ENCODE measurements at regions of chr1 and their contacts with region 1.

Region 1: DNA sequence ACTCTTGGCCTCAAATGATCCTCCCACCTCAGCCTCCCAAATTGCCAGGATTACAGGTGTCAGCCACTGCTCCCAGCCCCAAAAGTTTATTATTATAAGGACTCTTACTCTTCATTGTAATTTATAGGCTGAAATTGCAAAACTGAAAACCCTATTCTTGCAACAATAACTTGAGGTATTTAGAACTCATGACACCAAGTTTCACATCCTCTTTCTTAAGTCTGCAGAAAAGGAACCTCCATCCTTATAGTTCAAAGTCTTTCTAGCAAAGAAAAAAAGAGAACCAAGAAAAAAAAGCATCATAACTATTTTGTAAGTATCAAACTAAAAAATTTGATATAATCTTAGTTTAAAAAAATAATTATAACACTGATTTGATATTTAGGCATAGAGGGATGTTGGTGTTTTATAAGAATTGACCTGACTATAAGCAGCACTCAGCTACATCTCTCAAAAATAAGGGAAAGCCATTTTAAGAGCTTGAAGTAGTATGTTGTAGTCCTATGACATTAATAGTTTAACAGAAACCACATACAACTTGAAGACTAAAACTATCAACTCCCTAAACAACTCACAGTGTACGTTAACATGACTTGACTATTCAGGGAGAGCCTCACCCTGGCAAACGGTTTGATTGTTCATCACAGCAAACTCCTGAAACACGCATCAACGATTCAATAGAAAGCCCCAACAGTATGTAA is 122.4 kb downstream of the AKT3 start:
- DNase-seq: no peak
- H3K4me3 Mint-ChIP-seq: no peak overlapping the region
- H3K27ac Mint-ChIP-seq: no peak overlapping the region
- H3K4me1 Mint-ChIP-seq: no peaks in the 10 kb centered on the region
- H3K27me3 Mint-ChIP-seq: no peaks in the 10 kb centered on the region
- CTCF ChIP-seq: no peak

Region 2: DNA sequence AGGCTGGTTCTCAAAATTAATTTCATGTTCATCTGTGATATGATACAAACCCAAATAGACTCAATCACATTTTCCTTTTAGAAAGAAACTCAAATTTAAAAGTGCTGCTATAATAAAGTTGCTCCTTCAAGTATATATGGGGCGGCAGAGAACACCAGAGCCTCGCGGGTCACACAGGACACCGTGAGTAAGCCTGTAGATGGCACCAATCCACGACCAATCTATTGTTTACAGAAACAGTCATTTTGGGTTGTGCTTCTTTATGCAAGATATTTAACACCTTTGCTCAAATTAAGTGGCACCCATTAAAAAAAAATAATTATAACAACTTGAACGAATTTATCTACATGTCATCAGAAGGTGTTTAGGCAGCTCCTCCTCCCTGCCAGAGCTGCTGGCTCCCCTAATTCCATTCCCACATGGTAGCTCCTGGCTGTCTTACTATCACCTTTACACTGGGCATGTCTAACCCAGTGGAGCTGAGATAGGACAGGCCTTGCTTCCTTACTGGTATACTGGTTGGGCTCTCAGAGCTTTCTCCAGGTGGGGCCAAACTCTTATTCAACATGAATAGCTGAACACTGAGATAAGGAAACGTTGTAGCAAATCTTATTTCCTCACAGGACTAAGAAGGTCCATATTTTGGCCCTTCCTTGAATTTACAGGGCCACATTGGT is 184.8 kb before region 1 on chr1:
- CTCF ChIA-PET with region 1: no interaction called
- POLR2A ChIA-PET with region 1: no interaction called
- intact Hi-C with region 1: no loop called
- DNase-seq: peak; percentile 57
- H3K4me3 Mint-ChIP-seq: no peak overlapping the region
- H3K27ac Mint-ChIP-seq: no peak overlapping the region
- H3K4me1 Mint-ChIP-seq: no peaks in the 10 kb centered on the region
- H3K27me3 Mint-ChIP-seq: no peaks in the 10 kb centered on the region
- CTCF ChIP-seq: no peak

Region 3: DNA sequence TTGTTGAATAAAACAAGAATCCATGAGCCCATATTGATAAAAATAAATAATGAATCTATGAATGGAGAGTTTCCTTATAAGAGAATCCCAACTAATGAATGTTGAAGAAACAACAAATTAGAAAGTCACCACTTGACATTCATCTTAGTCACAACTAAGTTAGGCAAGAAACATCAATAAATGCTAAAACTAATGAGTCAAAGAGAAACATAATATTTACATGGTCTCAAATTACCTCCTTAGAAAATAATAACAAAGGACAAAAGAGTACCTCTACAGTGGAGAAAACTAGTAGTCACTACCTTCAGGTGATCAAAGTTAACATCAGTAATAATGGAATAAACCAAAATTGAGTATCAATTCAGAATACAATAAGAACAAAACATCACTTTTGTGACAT is 28.9 kb after region 1 on chr1:
- CTCF ChIA-PET with region 1: interaction called, 3 read pairs
- POLR2A ChIA-PET with region 1: interaction called, 3 read pairs
- intact Hi-C with region 1: loop called (anchors 2 kb)
- DNase-seq: no peak
- H3K4me3 Mint-ChIP-seq: no peak overlapping the region
- H3K27ac Mint-ChIP-seq: no peak overlapping the region
- H3K4me1 Mint-ChIP-seq: no peaks in the 10 kb centered on the region
- H3K27me3 Mint-ChIP-seq: no peaks in the 10 kb centered on the region
- CTCF ChIP-seq: no peak

Region 4: GRCh38 chr1:243806310-243806709 is 78.7 kb after region 1 on chr1:
- CTCF ChIA-PET with region 1: no interaction called
- POLR2A ChIA-PET with region 1: no interaction called
- intact Hi-C with region 1: no loop called
- DNase-seq: no peak
- H3K4me3 Mint-ChIP-seq: no peak overlapping the region
- H3K27ac Mint-ChIP-seq: no peak overlapping the region
- H3K4me1 Mint-ChIP-seq: peaks cover 8% of the 10 kb centered on the region
- H3K27me3 Mint-ChIP-seq: no peaks in the 10 kb centered on the region
- CTCF ChIP-seq: no peak

Region 5: GRCh38 chr1:243974451-243975292 is 247.0 kb after region 1 on chr1:
- CTCF ChIA-PET with region 1: no interaction called
- POLR2A ChIA-PET with region 1: no interaction called
- intact Hi-C with region 1: no loop called
- DNase-seq: peak; percentile 67
- H3K4me3 Mint-ChIP-seq: no peak overlapping the region
- H3K27ac Mint-ChIP-seq: no peak overlapping the region
- H3K4me1 Mint-ChIP-seq: peaks cover 5% of the 10 kb centered on the region
- H3K27me3 Mint-ChIP-seq: peaks cover 8% of the 10 kb centered on the region
- CTCF ChIP-seq: no peak

Measured in MCF 10A (cell line).